Astrocyte of the cerebellum (primary cell): ENCODE measurements at regions of chr1 and their contacts with region 1.

Region 1: GRCh38 chr1:7299329-7299799 is 471.7 kb upstream of the VAMP3 start:
- DNase-seq: peak; percentile 96
- H3K4me3 ChIP-seq: no peak overlapping the region
- CTCF ChIP-seq: no peak

Region 2: GRCh38 chr1:7398982-7399381 is 99.6 kb after region 1 on chr1:
- in situ Hi-C with region 1: loop called (anchors 5 kb)
- DNase-seq: no peak
- H3K4me3 ChIP-seq: no peak overlapping the region
- CTCF ChIP-seq: no peak